HEK293 (cell line): ENCODE measurements at regions of chr19 and their contacts with region 1.

Region 1: GRCh38 chr19:20923077-20923871 is at the start of gene ZNF85:
- H3K4me3 ChIP-seq: peak within 1 kb of the TSS; percentile 53
- H3K27ac ChIP-seq: peak within 1 kb of the TSS; percentile 78
- H3K4me1 ChIP-seq: no peaks in the 10 kb centered on the region
- CTCF ChIP-seq: no peak

Region 2: GRCh38 chr19:20776083-20777076 is 146.9 kb before region 1 on chr19 and contains the start of gene ZNF66:
- CTCF ChIA-PET with region 1: no interaction called
- POLR2A ChIA-PET with region 1: interaction called, 19 read pairs
- H3K4me3 ChIP-seq: peak within 1 kb of the TSS; percentile 80
- H3K27ac ChIP-seq: no peak within 1 kb of the TSS
- H3K4me1 ChIP-seq: no peaks in the 10 kb centered on the region
- CTCF ChIP-seq: no peak

Region 3: GRCh38 chr19:21020298-21021227 is 97.3 kb after region 1 on chr19 and contains the start of gene ZNF430:
- CTCF ChIA-PET with region 1: no interaction called
- POLR2A ChIA-PET with region 1: interaction called, 15 read pairs
- H3K4me3 ChIP-seq: peak within 1 kb of the TSS; percentile 93
- H3K27ac ChIP-seq: peak within 1 kb of the TSS; percentile 84
- H3K4me1 ChIP-seq: no peaks in the 10 kb centered on the region
- CTCF ChIP-seq: no peak

Region 4: GRCh38 chr19:21082011-21082975 is 159.0 kb after region 1 on chr19 and contains the start of gene ZNF714:
- CTCF ChIA-PET with region 1: no interaction called
- POLR2A ChIA-PET with region 1: interaction called, 14 read pairs
- H3K4me3 ChIP-seq: peak within 1 kb of the TSS; percentile 84
- H3K27ac ChIP-seq: peak within 1 kb of the TSS; percentile 69
- H3K4me1 ChIP-seq: peaks cover 9% of the 10 kb centered on the region; the same call in 1 of the 2 replicates
- CTCF ChIP-seq: no peak